ENCODE measurements at regions of chr1 and their contacts with region 1.

Region 1: DNA sequence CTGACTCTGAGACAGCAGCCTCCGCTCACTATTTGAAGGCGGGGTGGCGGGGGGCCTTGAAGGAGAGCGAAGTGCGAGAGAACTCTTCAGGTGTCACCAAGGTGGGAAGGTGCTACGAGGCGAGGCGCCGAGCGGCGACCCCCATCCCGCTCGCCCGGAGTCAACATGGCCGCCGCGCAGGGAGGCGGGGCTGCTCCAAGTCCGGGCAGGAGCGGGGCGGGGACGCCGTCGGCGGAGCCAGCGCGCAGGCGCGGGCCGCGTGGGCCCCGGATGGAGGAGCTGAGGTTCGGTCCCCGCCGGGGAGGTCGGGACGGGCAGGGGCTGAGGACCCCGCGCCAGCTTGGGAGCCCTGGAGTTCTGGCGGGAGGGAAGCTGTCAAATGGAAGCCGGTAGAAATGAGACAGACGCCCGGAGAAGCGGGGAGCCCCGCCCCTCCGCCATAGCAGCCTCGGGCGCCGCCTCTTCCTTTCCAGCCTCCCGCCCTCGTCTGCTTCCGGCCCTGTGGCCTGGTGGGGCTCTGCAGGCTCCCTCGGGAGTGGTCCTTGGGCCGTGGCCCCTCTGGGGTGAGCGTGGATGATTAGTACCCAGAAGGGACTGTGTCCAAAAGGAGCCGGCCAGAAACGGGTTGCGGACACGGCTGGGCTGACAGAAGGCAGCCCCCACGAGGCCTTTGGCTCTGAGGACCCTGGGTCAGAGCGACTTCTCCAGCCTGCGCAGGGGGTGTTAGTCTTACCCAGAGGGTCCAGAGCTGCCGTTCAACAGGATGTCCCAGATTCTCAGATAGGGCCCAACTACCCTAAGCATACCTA is at the start of gene PIGV:
- DNase-seq: peak; percentile 89 to 95 (median 92)
- H3K4me3 ChIP-seq: peak within 1 kb of the TSS; percentile 67
- H3K27ac ChIP-seq: peak within 1 kb of the TSS; percentile 96 to 99
- H3K4me1 ChIP-seq: peaks cover 23% of the 10 kb centered on the region
- H3K27me3 ChIP-seq: no peaks in the 10 kb centered on the region
- CTCF ChIP-seq: peak in 2 of 3 donors; percentile 46 to 51
- EP300 ChIP-seq: no peak
- POLR2A ChIP-seq: peak; percentile 84
- total RNA-seq, gene PIGV: 9.2 to 15.4 (median 10.5) TPM

Region 2: GRCh38 chr1:26602378-26602959 is 185.4 kb before region 1 on chr1:
- intact Hi-C with region 1: loop called (anchors 2 to 5 kb)
- DNase-seq: peak in 1 of 5 donors; percentile 60
- H3K4me3 ChIP-seq: no peak overlapping the region
- H3K27ac ChIP-seq: no peak overlapping the region
- H3K4me1 ChIP-seq: no peaks in the 10 kb centered on the region
- H3K27me3 ChIP-seq: no peaks in the 10 kb centered on the region
- CTCF ChIP-seq: peak; percentile 81 to 97 (median 94)
- EP300 ChIP-seq: no peak
- POLR2A ChIP-seq: no peak

Region 3: GRCh38 chr1:26695356-26696118 is 92.4 kb before region 1 on chr1 and contains the start of gene ARID1A:
- intact Hi-C with region 1: loop called (anchors 5 kb)
- DNase-seq: peak; percentile 94 to 97 (median 95)
- H3K4me3 ChIP-seq: peak within 1 kb of the TSS; percentile 87
- H3K27ac ChIP-seq: peak within 1 kb of the TSS; percentile 93
- H3K4me1 ChIP-seq: peaks cover 12% of the 10 kb centered on the region
- H3K27me3 ChIP-seq: no peaks in the 10 kb centered on the region
- CTCF ChIP-seq: peak in 2 of 3 donors; percentile 40 to 77
- EP300 ChIP-seq: no peak
- POLR2A ChIP-seq: peak; percentile 92
- total RNA-seq, gene ARID1A: 28.5 to 102 (median 77.5) TPM

Region 4: GRCh38 chr1:26723013-26723991 is 64.6 kb before region 1 on chr1:
- intact Hi-C with region 1: loop called in 2 of 4 experiments (anchors 10 kb)
- DNase-seq: peak; percentile 86 to 93 (median 91)
- H3K4me3 ChIP-seq: no peak overlapping the region
- H3K27ac ChIP-seq: peak overlapping the region; percentile 7 to 55
- H3K4me1 ChIP-seq: peaks cover 25% of the 10 kb centered on the region
- H3K27me3 ChIP-seq: no peaks in the 10 kb centered on the region
- CTCF ChIP-seq: no peak
- EP300 ChIP-seq: no peak
- POLR2A ChIP-seq: no peak

Measured in ovary (tissue), 10 donors.